HEK293T (cell line): ENCODE measurements at regions of chr9 and their contacts with region 1.

Region 1: DNA sequence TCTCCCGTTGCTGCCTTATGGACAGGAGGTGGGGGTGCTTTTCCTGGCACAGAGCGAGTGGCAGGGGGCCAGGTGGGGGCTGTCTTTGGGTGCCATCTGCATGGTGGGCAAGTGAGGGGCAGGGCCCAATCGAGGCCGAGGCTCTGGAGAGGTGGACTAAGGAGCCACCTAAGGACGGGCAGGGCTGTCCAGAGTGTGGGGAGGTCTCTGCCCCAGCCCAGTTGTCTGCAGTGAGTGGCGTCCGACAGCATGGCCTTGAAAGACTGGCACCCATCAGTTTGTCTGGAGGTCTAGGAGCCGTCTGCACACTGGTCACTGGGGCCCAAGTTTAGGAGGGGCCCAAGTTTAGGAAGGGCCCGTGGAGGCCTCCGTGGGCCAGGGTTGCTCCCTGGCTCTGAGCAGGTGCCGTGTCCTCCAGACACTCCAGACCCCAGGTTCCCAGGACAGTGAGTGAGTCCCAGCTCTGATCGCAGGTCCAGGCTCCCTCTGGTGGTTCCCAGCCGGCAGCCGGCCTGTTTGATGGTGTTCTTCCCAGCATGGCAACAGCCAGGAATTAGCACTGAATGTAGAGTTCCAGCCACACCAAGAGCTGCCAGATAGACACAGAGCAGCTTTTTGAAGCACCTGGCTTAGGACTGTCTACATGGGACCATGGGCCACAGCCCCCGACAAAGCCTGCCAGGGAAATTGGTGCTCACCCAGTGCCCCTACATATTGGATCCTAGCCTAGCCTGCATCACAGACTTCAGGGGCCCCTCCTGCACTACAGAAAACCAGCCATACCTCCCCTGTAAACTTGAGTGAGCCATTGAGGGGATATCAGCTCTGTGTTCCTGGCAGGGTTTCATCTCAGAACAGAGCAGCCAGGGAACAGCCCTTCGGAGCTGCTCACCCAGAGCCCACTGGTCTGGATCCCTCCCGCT is 120.9 kb downstream of the WNK2 start:
- DNase-seq: peak; percentile 61

Region 2: DNA sequence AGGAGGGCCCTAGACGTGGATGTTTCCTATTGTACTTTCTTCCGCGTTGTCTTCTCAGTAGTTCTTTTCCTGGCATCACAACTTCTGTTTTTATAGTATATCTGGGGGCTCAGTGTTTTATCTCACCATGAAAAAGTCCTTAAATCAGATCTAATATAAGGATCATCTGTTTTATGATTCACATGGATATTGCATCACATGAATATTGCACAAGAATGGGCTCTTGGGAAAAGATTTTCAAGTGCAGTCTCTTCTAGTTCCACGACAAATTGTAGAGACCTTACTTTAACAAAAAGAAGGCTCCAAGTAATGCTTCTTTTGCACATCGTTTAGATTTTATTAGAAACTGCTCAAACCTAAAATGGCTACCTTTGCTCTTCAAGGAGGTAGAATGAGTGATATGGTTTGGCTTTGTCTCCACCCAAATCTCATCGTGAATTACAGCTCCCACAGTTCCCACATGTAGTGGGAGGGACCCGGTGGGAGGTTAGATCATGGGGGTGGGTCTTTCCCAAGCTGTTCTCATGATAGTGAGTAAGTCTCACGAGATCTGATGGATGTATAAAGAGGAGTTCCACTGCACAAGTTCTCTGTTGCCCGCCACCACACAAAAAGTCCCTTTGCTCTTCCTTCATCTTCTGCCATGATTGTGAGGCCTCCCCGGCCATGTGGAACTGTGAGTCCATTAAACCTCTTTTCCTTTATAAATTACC is 93.0 kb after region 1 on chr9:
- CTCF ChIA-PET with region 1: no interaction called
- POLR2A ChIA-PET with region 1: no interaction called
- DNase-seq: no peak

Region 3: GRCh38 chr9:93415176-93415690 is 110.4 kb after region 1 on chr9:
- CTCF ChIA-PET with region 1: interaction called, 10 read pairs
- POLR2A ChIA-PET with region 1: no interaction called
- DNase-seq: no peak